ENCODE measurements at regions of chr2 and their contacts with region 1.

Region 1: GRCh38 chr2:202265467-202266277 is at the start of gene NOP58:
- DNase-seq: peak; percentile 92
- H3K4me3 Mint-ChIP-seq: peak within 1 kb of the TSS; percentile 58
- H3K27ac Mint-ChIP-seq: peak within 1 kb of the TSS; percentile 69
- H3K4me1 Mint-ChIP-seq: peaks cover 15% of the 10 kb centered on the region
- H3K27me3 Mint-ChIP-seq: no peaks in the 10 kb centered on the region
- total RNA-seq, gene NOP58: 206 and 211 TPM in 2 replicates

Region 2: GRCh38 chr2:200864176-200864976 is 1401.3 kb before region 1 on chr2 and contains the start of gene CLK1:
- intact Hi-C with region 1: loop called (anchors 10 kb)
- DNase-seq: peak; percentile 91
- H3K4me3 Mint-ChIP-seq: peak within 1 kb of the TSS; percentile 93
- H3K27ac Mint-ChIP-seq: peak within 1 kb of the TSS; percentile 94
- H3K4me1 Mint-ChIP-seq: peaks cover 32% of the 10 kb centered on the region
- H3K27me3 Mint-ChIP-seq: no peaks in the 10 kb centered on the region
- total RNA-seq, gene CLK1: 114 and 122 TPM in 2 replicates

Region 3: DNA sequence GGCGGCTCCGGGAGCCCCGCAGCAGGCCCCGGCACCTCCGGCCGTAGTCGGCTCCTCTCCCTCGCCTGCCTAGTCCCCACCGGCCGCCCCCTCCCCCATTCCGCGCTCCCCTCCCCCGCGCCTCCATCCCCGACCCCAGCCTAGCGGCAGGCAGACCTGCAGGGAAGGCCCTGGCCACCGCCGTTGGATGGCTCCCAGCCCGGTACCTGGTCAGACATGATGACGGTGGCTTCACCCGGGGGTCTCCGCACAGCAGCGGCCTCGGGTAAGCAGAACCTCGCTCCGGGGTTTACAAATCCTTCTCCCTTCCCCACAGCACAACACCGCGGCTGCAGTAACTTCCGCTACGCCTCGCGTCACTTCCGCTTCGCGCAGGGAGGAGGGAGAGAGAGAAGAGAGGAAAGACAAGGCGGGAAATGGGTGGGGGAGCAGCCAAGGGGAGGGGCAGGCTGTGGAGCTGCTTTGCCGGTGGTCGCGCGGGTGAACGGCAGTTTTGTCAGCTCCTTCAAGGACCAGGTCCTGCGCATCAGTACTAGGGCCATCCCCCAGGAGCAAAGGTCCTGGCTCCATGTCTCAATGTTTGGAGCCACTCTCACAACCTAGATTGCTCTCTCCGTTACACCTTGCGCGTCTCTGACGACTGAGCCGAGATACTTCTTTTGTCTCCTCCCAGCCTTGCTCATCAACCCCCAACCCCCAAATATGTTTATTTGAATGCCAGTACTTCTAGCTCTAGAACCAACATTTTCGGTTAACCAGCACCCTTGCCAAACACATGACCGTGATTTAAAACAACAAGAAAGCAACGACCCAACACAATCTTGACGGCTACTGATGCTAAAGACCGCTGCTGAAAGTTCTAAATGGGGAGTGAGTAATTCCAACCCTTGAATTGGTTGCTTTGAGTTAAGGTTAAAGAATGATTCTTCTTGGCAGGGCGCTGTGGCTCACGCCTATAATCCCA is 27.2 kb before region 1 on chr2 and contains the start of gene SUMO1:
- intact Hi-C with region 1: loop called (anchors 1 kb)
- DNase-seq: peak; percentile 88
- H3K4me3 Mint-ChIP-seq: peak within 1 kb of the TSS; percentile 98
- H3K27ac Mint-ChIP-seq: peak within 1 kb of the TSS; percentile 94
- H3K4me1 Mint-ChIP-seq: peaks cover 20% of the 10 kb centered on the region
- H3K27me3 Mint-ChIP-seq: no peaks in the 10 kb centered on the region
- total RNA-seq, gene SUMO1: 119 and 124 TPM in 2 replicates

Region 4: DNA sequence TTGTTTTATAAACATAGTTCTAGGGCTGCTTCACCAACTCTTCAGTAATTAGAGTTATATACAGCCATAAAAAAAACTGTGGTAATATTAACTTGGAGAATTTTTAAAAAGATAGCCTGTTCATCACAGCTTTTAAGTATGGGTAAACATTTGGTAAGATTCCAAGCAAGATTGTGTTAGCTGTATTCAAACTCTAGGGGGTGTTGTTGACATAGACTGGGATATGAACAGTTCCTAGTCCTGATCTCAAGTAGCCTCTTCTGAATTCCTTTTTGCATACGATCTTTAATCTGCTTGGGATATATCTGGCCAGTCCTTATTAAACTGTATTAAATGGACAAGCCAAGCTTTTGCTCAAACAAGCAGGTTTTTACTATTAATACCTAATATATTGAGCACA is 13.3 kb after region 1 on chr2:
- intact Hi-C with region 1: loop called (anchors 1 kb)
- DNase-seq: no peak
- H3K4me3 Mint-ChIP-seq: no peak overlapping the region
- H3K27ac Mint-ChIP-seq: peak overlapping the region; percentile 52
- H3K4me1 Mint-ChIP-seq: peaks cover 29% of the 10 kb centered on the region
- H3K27me3 Mint-ChIP-seq: no peaks in the 10 kb centered on the region